ENCODE measurements at regions of chr5 and their contacts with region 1.

Region 1: DNA sequence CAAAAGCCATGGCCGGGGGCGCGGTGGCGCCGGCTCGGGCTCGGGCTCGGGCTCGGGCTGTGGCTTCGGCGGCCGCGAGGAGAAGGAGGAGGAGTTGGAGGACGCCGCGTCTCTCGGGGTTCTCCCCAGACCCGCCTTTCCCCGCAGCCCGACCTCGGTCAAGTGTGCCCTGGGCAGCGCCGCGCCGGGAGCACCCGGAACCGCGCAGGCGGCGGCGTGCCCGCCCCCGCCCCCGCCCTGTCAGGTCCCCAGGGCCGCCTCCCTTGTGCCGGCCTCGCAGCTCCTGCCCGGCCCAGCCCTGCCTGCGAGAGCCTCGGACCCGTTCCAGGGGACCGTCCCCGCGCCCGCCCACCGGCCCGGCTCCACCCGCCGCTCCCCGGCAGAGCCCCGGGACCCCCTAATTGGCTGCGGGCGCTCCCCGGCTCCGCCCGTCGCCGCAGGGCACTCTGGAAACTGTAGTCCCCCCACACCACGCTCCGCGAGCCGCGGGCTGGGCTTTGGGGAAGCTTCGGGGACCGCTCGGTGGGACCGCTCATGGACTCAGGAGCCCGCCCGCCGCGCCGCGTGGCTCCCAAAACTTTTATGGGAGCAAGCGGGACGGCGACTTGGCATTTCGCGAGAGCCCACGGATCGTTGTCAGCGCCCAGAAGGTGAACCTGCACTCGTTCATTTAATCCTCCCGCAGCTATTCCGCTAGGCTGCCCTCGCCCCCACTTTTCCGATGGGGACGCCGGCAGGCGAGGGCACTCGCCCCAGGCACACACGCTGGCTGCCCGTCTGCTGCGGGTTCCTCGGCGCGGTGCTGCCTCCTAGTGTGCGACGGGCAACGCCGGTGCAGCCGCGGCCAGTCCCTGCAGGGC is at the start of gene STK10:
- DNase-seq: peak; percentile 89
- ATAC-seq: peak; percentile 72
- H3K4me3 ChIP-seq: peak within 1 kb of the TSS; percentile 98
- H3K27ac ChIP-seq: peak within 1 kb of the TSS; percentile 82
- H3K4me1 ChIP-seq: peaks cover 20% of the 10 kb centered on the region
- H3K27me3 ChIP-seq: no peaks in the 10 kb centered on the region
- CTCF ChIP-seq: peak; percentile 86
- total RNA-seq, gene STK10: 25.7 and 30.1 TPM in 2 replicates

Region 2: DNA sequence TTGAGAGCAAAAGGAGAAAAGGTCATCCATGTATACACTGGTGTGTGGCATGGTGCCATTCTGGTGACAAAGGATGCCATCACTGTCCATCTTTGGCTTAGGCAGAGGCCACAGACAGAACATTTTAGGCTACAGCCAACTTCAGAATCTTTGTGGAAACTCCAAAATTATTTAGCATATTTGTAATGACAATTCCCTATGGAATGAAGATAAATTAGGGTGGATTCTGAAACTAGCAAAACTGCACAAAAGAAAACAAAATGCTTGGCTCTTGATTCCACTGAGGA is 274.3 kb before region 1 on chr5:
- CTCF ChIA-PET with region 1: no interaction called
- POLR2A ChIA-PET with region 1: no interaction called
- intact Hi-C with region 1: loop called (anchors 10 kb)
- DNase-seq: no peak
- ATAC-seq: peak; percentile 38; the same call in 1 of the 2 replicates
- H3K4me3 ChIP-seq: no peak overlapping the region
- H3K27ac ChIP-seq: no peak overlapping the region
- H3K4me1 ChIP-seq: peaks cover 10% of the 10 kb centered on the region; the same call in 1 of the 2 replicates
- H3K27me3 ChIP-seq: no peaks in the 10 kb centered on the region
- CTCF ChIP-seq: no peak

Region 3: GRCh38 chr5:172006321-172007174 is 181.7 kb before region 1 on chr5 and contains the start of gene FBXW11:
- CTCF ChIA-PET with region 1: no interaction called
- POLR2A ChIA-PET with region 1: no interaction called
- intact Hi-C with region 1: loop called (anchors 2 kb)
- DNase-seq: peak; percentile 98
- ATAC-seq: peak; percentile 88
- H3K4me3 ChIP-seq: peak within 1 kb of the TSS; percentile 80
- H3K27ac ChIP-seq: peak within 1 kb of the TSS; percentile 79
- H3K4me1 ChIP-seq: peaks cover 40% of the 10 kb centered on the region
- H3K27me3 ChIP-seq: no peaks in the 10 kb centered on the region
- CTCF ChIP-seq: no peak
- total RNA-seq, gene FBXW11: 62.8 and 69.2 TPM in 2 replicates

Region 4: GRCh38 chr5:172106511-172107356 is 81.5 kb before region 1 on chr5:
- CTCF ChIA-PET with region 1: interaction called, 12 read pairs
- POLR2A ChIA-PET with region 1: interaction called, 12 read pairs
- intact Hi-C with region 1: loop called (anchors 1 kb)
- DNase-seq: peak; percentile 59
- ATAC-seq: peak; percentile 21
- H3K4me3 ChIP-seq: peak overlapping the region; percentile 30; the same call in 1 of the 2 replicates
- H3K27ac ChIP-seq: peak overlapping the region; percentile 11; the same call in 1 of the 2 replicates
- H3K4me1 ChIP-seq: peaks cover 32% of the 10 kb centered on the region
- H3K27me3 ChIP-seq: no peaks in the 10 kb centered on the region
- CTCF ChIP-seq: peak; percentile 92

Region 5: GRCh38 chr5:172144291-172144815 is 43.9 kb before region 1 on chr5:
- CTCF ChIA-PET with region 1: no interaction called
- POLR2A ChIA-PET with region 1: interaction called, 13 read pairs
- intact Hi-C with region 1: no loop called
- DNase-seq: no peak
- ATAC-seq: no peak
- H3K4me3 ChIP-seq: no peak overlapping the region
- H3K27ac ChIP-seq: no peak overlapping the region
- H3K4me1 ChIP-seq: no peaks in the 10 kb centered on the region
- H3K27me3 ChIP-seq: no peaks in the 10 kb centered on the region
- CTCF ChIP-seq: no peak

Region 6: GRCh38 chr5:172283020-172283861 is 95.0 kb after region 1 on chr5 and contains the start of gene UBTD2:
- CTCF ChIA-PET with region 1: interaction called, 3 read pairs
- POLR2A ChIA-PET with region 1: interaction called, 5 read pairs
- intact Hi-C with region 1: loop called (anchors 2 kb)
- DNase-seq: peak; percentile 74
- ATAC-seq: peak; percentile 75
- H3K4me3 ChIP-seq: peak within 1 kb of the TSS; percentile 97
- H3K27ac ChIP-seq: peak within 1 kb of the TSS; percentile 43
- H3K4me1 ChIP-seq: peaks cover 21% of the 10 kb centered on the region
- H3K27me3 ChIP-seq: no peaks in the 10 kb centered on the region
- CTCF ChIP-seq: peak; percentile 49; the same call in 1 of the 2 replicates
- total RNA-seq, gene UBTD2: 22.6 and 23.8 TPM in 2 replicates

Region 7: GRCh38 chr5:172293054-172293744 is 104.9 kb after region 1 on chr5:
- CTCF ChIA-PET with region 1: interaction called, 3 read pairs
- POLR2A ChIA-PET with region 1: no interaction called
- intact Hi-C with region 1: loop called (anchors 1 kb)
- DNase-seq: peak; percentile 81
- ATAC-seq: peak; percentile 99
- H3K4me3 ChIP-seq: no peak overlapping the region
- H3K27ac ChIP-seq: no peak overlapping the region
- H3K4me1 ChIP-seq: no peaks in the 10 kb centered on the region
- H3K27me3 ChIP-seq: no peaks in the 10 kb centered on the region
- CTCF ChIP-seq: peak; percentile 92

Measured in PC-3 (cell line).